Calu3 (cell line): ENCODE measurements at regions of chr1 and their contacts with region 1.

Region 1: DNA sequence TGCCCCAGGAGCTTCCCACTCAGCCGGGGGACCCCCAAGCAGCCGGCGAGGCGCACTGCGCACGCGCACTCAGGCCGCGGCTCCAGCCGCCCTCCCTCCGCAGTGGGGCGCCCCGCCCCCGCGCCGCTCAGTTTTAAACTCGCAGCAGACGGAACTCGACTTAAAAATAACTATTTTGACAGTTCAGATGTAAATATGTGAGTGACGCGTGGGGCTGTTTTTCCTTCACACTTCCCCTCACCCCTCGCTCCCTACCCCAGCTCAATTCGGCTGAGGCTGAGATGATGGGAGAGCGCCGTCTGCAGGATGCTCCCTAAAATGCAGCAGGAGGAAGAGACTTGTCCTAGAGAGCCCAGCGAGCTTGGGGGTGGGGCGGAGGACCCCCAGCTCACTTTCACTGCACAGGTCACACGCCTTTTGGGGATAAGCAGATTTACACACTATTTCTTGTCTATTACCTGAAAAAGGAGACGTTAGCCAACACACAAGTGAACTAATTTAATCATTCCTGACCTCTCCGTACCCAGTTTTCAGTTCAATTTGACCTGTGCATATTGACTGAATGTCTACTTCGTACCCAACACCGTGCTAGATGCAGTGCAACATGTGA is 8.9 kb upstream of the LEMD1 start:
- DNase-seq: peak; percentile 76
- H3K4me3 Mint-ChIP-seq: peak overlapping the region; percentile 63
- H3K27ac Mint-ChIP-seq: peak overlapping the region; percentile 13
- H3K4me1 Mint-ChIP-seq: peaks cover 8% of the 10 kb centered on the region
- H3K27me3 Mint-ChIP-seq: peaks cover 65% of the 10 kb centered on the region
- CTCF ChIP-seq: peak; percentile 94

Region 2: GRCh38 chr1:205199090-205199930 is 231.5 kb before region 1 on chr1:
- CTCF ChIA-PET with region 1: no interaction called
- intact Hi-C with region 1: no loop called
- DNase-seq: no peak
- H3K4me3 Mint-ChIP-seq: no peak overlapping the region
- H3K27ac Mint-ChIP-seq: no peak overlapping the region
- H3K4me1 Mint-ChIP-seq: no peaks in the 10 kb centered on the region
- H3K27me3 Mint-ChIP-seq: no peaks in the 10 kb centered on the region
- CTCF ChIP-seq: no peak

Region 3: GRCh38 chr1:205294175-205294913 is 136.5 kb before region 1 on chr1:
- CTCF ChIA-PET with region 1: no interaction called
- intact Hi-C with region 1: no loop called
- DNase-seq: no peak
- H3K4me3 Mint-ChIP-seq: no peak overlapping the region
- H3K27ac Mint-ChIP-seq: peak overlapping the region; percentile 14
- H3K4me1 Mint-ChIP-seq: peaks cover 45% of the 10 kb centered on the region
- H3K27me3 Mint-ChIP-seq: no peaks in the 10 kb centered on the region
- CTCF ChIP-seq: no peak

Region 4: DNA sequence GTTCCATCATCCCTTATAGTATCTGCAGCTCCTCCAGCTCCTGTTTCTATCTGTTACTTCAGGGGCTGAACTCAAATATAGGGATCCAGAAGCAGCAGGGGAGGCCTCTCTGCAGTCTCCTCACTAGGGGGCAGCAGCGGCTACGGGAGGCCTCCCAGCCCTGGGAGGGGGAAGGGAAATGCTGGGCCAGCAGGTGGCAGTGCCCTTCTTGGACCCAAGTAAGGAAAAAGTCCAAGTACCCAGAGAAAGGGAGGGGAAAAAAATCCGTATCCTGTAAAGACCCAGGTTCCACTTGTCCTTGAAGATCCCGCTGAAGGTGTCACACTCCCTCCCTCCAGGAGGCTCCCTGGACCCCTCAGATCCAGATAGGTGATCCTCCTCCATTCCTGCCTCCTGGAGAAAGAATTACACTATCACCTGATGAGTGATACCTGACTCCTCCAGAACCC is 95.1 kb before region 1 on chr1:
- CTCF ChIA-PET with region 1: interaction called, 4 read pairs
- intact Hi-C with region 1: loop called (anchors 5 kb)
- DNase-seq: peak; percentile 95
- H3K4me3 Mint-ChIP-seq: no peak overlapping the region
- H3K27ac Mint-ChIP-seq: no peak overlapping the region
- H3K4me1 Mint-ChIP-seq: no peaks in the 10 kb centered on the region
- H3K27me3 Mint-ChIP-seq: peaks cover 69% of the 10 kb centered on the region
- CTCF ChIP-seq: peak; percentile 96

Region 5: GRCh38 chr1:205354259-205354904 is 76.4 kb before region 1 on chr1:
- CTCF ChIA-PET with region 1: interaction called, 16 read pairs
- intact Hi-C with region 1: no loop called
- DNase-seq: peak; percentile 74
- H3K4me3 Mint-ChIP-seq: no peak overlapping the region
- H3K27ac Mint-ChIP-seq: no peak overlapping the region
- H3K4me1 Mint-ChIP-seq: peaks cover 25% of the 10 kb centered on the region
- H3K27me3 Mint-ChIP-seq: peaks cover 26% of the 10 kb centered on the region
- CTCF ChIP-seq: peak; percentile 88

Region 6: DNA sequence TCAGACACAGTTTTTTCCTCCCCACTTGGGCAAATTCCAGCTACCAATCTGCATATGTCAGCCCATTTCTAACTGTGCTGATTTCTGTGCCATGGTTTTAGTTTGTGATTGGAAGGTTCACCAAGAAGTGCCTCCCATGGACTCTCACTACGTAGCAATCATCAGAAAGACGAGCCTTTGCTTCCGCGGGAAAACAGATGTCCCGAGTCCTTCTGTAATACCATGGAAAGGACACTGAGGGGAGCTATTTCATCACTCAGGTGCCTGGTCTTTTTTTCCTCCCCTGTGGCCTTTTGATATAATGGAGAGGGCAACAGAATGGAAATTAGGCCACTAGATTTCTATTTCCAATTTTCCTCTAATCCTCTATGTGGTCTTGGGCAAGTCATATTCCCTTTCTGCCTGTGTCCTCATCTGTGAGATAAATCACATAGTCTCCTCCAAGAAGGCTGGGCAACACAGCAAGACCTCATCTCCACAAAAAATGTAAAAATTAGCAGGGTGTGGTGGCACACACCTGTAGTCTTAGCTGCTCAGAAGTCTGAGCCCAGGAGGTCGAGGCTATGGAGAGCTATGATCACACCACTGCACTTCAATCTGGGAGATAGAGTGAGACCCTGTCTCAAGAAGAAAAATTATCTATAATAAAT is 33.7 kb before region 1 on chr1:
- CTCF ChIA-PET with region 1: interaction called, 8 read pairs
- intact Hi-C with region 1: loop called (anchors 2 kb)
- DNase-seq: peak; percentile 41
- H3K4me3 Mint-ChIP-seq: no peak overlapping the region
- H3K27ac Mint-ChIP-seq: no peak overlapping the region
- H3K4me1 Mint-ChIP-seq: no peaks in the 10 kb centered on the region
- H3K27me3 Mint-ChIP-seq: peaks cover 18% of the 10 kb centered on the region
- CTCF ChIP-seq: peak; percentile 84

Region 7: GRCh38 chr1:205477759-205478247 is 47.0 kb after region 1 on chr1:
- CTCF ChIA-PET with region 1: interaction called, 19 read pairs
- intact Hi-C with region 1: no loop called
- DNase-seq: peak; percentile 96
- H3K4me3 Mint-ChIP-seq: peak overlapping the region; percentile 29
- H3K27ac Mint-ChIP-seq: peak overlapping the region; percentile 68
- H3K4me1 Mint-ChIP-seq: peaks cover 30% of the 10 kb centered on the region
- H3K27me3 Mint-ChIP-seq: peaks cover 44% of the 10 kb centered on the region
- CTCF ChIP-seq: no peak

Region 8: GRCh38 chr1:205656236-205656635 is 225.4 kb after region 1 on chr1:
- CTCF ChIA-PET with region 1: no interaction called
- intact Hi-C with region 1: no loop called
- DNase-seq: no peak
- H3K4me3 Mint-ChIP-seq: no peak overlapping the region
- H3K27ac Mint-ChIP-seq: no peak overlapping the region
- H3K4me1 Mint-ChIP-seq: peaks cover 9% of the 10 kb centered on the region
- H3K27me3 Mint-ChIP-seq: no peaks in the 10 kb centered on the region
- CTCF ChIP-seq: no peak